ENCODE measurements at regions of chr6 and their contacts with region 1.

Region 1: GRCh38 chr6:446418-447366 is 55.1 kb downstream of the IRF4 start:
- DNase-seq: peak; percentile 96
- ATAC-seq: peak; percentile 77
- H3K4me3 Mint-ChIP-seq: peak overlapping the region; percentile 65
- H3K27ac Mint-ChIP-seq: peak overlapping the region; percentile 90
- H3K4me1 Mint-ChIP-seq: peaks cover 52% of the 10 kb centered on the region
- H3K27me3 Mint-ChIP-seq: no peaks in the 10 kb centered on the region

Region 2: DNA sequence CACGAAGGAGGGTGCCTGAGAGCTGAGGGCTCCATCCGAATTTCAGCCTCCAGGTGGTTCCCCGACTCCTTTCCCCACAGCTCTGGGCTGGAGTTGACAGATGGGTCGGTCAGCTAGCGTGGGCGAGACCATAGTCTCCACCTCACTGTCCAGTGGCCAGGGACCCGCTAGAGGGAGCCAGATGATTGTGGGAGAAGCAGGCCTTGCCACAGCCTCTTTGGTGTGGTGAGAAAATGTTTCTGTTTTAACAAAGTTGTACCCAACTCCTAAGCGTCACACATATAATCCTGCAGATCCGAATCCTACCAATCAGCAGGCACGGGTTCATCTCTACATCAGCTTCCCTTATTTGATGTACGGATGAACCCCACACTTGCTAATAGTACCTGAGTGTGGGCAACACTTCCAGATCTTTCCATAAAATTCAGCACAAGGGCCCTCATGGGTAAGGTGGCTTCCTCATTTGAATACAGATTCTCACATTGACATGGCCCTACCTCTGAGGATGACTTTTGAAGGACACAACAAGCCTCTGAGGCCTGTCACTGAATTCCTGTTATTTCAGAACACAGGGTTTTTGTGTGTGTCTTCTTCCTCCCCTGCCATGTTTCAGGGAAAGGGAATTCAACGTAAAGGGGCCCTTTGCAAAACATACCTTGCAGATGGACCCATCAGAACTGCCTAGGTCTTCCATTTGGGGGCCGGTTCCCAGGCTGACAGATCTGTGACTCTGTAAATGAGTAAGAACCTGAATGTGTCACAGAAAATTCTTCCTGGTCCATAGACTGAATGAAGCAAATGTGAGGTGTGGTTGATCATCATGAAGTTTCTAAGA is 257.7 kb before region 1 on chr6:
- CTCF ChIA-PET with region 1: no interaction called
- POLR2A ChIA-PET with region 1: no interaction called
- intact Hi-C with region 1: loop called (anchors 1 kb)
- DNase-seq: peak; percentile 92
- ATAC-seq: peak; percentile 78
- H3K4me3 Mint-ChIP-seq: no peak overlapping the region
- H3K27ac Mint-ChIP-seq: peak overlapping the region; percentile 95
- H3K4me1 Mint-ChIP-seq: peaks cover 52% of the 10 kb centered on the region
- H3K27me3 Mint-ChIP-seq: peaks cover 3% of the 10 kb centered on the region

Region 3: DNA sequence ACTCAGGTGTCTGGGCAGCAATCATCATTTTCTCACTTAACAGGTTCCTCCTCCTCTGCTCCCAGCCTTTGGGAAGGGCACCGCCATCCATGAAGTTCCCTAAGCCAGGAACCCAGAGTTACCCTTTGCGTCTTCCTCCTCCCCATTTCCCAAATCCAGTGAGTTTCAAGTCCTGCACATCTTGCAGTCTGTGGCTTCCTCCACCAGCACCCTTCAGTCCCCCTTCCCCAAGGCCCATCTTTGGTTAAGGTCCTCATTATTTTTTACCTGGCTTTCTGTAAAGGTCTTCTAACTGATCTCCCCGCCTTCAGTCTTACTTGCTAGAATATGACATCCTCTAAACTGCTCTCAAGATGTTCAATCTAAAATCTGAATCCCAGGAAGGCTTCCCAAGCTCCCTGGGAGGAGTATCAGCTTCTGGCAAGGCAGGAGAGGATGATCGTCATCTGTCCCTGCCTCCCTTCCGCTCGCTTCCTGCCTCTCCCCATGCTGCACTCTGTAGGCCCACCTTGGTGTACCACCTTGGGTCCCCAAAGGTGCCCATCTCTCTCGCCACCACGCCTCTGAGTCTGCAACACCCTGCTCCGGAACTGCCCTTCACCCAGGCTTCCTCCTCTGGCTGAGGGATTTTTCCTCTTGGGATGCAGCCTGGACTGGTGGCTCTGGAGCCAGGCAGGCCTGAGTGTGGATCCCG is 165.8 kb before region 1 on chr6:
- CTCF ChIA-PET with region 1: no interaction called
- POLR2A ChIA-PET with region 1: no interaction called
- intact Hi-C with region 1: no loop called
- DNase-seq: no peak
- ATAC-seq: no peak
- H3K4me3 Mint-ChIP-seq: no peak overlapping the region
- H3K27ac Mint-ChIP-seq: no peak overlapping the region
- H3K4me1 Mint-ChIP-seq: peaks cover 6% of the 10 kb centered on the region
- H3K27me3 Mint-ChIP-seq: no peaks in the 10 kb centered on the region

Region 4: DNA sequence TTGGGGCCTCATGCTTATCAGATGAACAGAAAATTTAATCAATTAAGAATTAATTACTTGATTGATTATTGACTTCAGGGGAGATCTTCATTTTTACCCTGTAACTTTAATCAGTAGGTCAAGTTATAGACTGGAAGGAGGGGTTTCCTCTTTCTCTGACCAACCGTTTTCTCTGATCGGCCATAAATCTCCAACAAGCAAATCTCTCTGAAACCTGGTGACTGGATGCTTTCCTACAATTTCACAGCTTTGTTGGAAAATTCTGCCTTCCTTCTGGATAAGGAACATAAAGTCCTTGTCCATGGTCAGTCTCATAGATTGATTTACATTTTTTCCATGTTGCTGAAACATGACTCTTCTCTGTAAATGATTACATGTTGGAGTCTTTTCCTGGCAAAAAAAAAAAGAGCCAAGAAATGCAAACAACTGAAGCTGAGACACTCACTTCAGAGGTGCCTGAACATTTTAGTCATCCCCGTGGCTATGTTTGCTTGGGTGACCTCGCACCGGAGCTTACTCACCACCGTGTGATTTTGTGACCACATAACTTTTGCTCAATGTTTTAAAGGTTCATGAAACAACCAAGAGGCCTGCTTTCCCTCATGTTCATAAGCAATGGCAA is 24.1 kb before region 1 on chr6:
- CTCF ChIA-PET with region 1: interaction called, 3 read pairs
- POLR2A ChIA-PET with region 1: interaction called, 5 read pairs
- intact Hi-C with region 1: loop called (anchors 1 kb)
- DNase-seq: peak; percentile 87
- ATAC-seq: peak; percentile 99
- H3K4me3 Mint-ChIP-seq: no peak overlapping the region
- H3K27ac Mint-ChIP-seq: peak overlapping the region; percentile 63
- H3K4me1 Mint-ChIP-seq: peaks cover 31% of the 10 kb centered on the region
- H3K27me3 Mint-ChIP-seq: no peaks in the 10 kb centered on the region

Region 5: DNA sequence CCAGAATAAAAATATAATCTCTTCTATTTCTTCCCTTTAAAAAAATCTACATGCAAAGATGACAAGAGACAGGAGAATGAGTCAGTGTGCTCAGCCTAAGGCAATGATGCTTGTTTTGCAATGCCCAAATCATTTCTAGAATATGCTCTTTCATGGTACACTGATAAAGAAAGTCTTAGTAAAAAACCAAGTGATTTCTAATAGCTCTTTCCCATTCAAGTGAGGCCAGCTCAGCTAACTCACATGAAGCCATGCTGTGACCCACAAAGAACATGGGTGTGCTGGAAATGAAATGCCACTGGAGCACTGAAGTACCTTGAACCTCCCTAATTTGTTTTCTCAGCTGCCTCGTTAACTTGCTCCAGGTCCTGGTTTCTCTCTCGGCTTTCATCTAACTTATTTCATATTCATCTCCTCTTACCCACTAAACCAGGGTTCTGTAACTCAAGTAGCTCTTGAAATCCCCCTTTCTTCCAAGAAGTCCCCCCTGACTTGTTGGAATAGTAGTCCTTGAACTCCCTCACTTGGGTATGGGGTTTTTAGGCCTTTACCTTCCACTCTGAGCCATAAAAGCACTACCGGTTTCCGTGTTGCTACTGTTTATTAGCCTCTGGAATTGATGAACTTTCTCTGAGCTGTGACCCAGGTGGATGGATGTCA is 37.5 kb after region 1 on chr6:
- CTCF ChIA-PET with region 1: interaction called, 22 read pairs
- POLR2A ChIA-PET with region 1: interaction called, 23 read pairs
- intact Hi-C with region 1: loop called (anchors 1 kb)
- DNase-seq: peak; percentile 73
- ATAC-seq: peak; percentile 92
- H3K4me3 Mint-ChIP-seq: peak overlapping the region; percentile 58
- H3K27ac Mint-ChIP-seq: peak overlapping the region; percentile 100
- H3K4me1 Mint-ChIP-seq: peaks cover 88% of the 10 kb centered on the region
- H3K27me3 Mint-ChIP-seq: no peaks in the 10 kb centered on the region

Region 6: DNA sequence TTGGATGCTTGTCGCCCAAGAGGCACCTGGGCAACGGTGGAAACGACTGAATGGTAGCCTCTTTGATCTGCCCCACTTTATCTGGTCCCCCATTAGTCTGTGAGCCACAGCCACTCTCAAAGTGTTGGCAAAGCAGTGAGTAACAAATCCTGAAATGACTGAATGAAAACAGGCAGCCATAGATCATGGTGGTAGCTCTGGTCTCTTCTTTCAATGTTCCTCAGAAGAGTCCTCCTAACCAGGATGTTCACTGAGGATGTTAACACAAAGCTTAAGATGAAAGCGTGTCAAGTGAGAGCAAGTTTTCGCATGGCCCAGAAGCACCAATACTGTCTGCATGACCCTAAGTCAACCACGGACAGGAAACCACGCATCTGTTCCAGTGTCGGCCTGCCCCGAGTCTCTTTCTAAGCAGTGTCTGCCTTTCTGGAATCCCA is 52.1 kb after region 1 on chr6:
- CTCF ChIA-PET with region 1: interaction called, 18 read pairs
- POLR2A ChIA-PET with region 1: interaction called, 17 read pairs
- intact Hi-C with region 1: loop called (anchors 1 to 2 kb)
- DNase-seq: peak; percentile 81
- ATAC-seq: peak; percentile 64
- H3K4me3 Mint-ChIP-seq: peak overlapping the region; percentile 63
- H3K27ac Mint-ChIP-seq: peak overlapping the region; percentile 93
- H3K4me1 Mint-ChIP-seq: peaks cover 87% of the 10 kb centered on the region
- H3K27me3 Mint-ChIP-seq: no peaks in the 10 kb centered on the region

Region 7: GRCh38 chr6:548517-548916 is 101.8 kb after region 1 on chr6:
- CTCF ChIA-PET with region 1: interaction called, 3 read pairs
- POLR2A ChIA-PET with region 1: no interaction called
- intact Hi-C with region 1: loop called in 1 of 2 experiments (anchors 2 kb)
- DNase-seq: peak; percentile 75
- ATAC-seq: peak; percentile 90
- H3K4me3 Mint-ChIP-seq: peak overlapping the region; percentile 57
- H3K27ac Mint-ChIP-seq: peak overlapping the region; percentile 92
- H3K4me1 Mint-ChIP-seq: peaks cover 70% of the 10 kb centered on the region
- H3K27me3 Mint-ChIP-seq: no peaks in the 10 kb centered on the region